CD4-positive, alpha-beta memory T cell (primary cell): ENCODE measurements at regions of chr6 and their contacts with region 1.

Region 1: DNA sequence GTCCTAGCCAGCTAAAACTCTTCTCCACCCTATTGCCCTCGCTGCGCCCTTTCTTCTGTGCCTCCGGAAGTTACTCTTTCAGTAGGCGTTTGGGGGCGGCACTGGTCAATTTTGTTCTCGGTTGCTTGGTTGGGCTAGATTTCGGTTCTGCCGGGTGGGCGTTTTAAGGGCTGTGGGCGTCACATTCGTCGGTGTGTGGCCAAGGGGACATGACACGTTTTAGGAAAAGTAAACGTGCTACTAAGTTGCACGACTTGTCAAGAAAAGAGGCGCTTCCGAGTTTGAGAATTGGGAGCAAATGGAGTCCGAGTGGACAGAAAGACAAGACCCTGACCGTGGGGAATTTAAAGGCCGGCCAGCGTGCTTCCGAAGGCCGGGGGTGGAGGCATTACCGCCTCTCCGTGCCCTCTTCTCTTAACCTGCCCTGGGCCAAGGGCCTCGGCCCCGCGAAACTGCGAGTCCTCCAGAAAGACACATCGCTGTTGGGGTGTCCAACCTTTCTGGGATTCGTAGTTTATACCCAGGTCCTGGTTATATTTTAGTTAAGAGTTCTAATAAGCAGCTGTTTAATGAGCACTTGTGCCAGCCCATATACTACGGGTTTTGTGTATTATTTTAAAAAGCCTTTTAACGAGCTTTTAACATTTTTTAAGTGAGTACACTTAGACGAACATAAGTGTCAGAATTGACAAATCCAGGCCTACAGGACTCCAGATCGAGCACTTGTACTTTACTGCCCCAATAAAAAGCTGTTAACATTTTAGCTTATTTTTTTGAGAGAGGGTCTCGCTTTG is 661 bp upstream of the BAG6 start:
- DNase-seq: peak in 1 of 5 donors; percentile 93
- H3K4me3 ChIP-seq: peak overlapping the region; percentile 85 to 92
- H3K4me3 Mint-ChIP-seq: peak overlapping the region; percentile 96 to 100 (median 98)
- H3K27ac ChIP-seq: peak overlapping the region; percentile 93
- H3K27ac Mint-ChIP-seq: peak overlapping the region; percentile 99 to 100 (median 100)
- H3K4me1 ChIP-seq: peaks cover 33% of the 10 kb centered on the region
- H3K4me1 Mint-ChIP-seq: peaks cover 35 to 72% (median 46%) of the 10 kb centered on the region in 4 donors
- H3K27me3 ChIP-seq: no peaks in the 10 kb centered on the region
- H3K27me3 Mint-ChIP-seq: no peaks in the 10 kb centered on the region

Region 2: GRCh38 chr6:31271641-31272357 is 381.3 kb before region 1 on chr6 and contains the start of gene HLA-C:
- CTCF ChIA-PET with region 1: no interaction called
- POLR2A ChIA-PET with region 1: no interaction called
- intact Hi-C with region 1: no loop called
- DNase-seq: peak; percentile 92 to 98 (median 93)
- H3K4me3 ChIP-seq: peak within 1 kb of the TSS; percentile 88 to 94
- H3K4me3 Mint-ChIP-seq: peak within 1 kb of the TSS; percentile 95 to 100 (median 98)
- H3K27ac ChIP-seq: peak within 1 kb of the TSS; percentile 100
- H3K27ac Mint-ChIP-seq: peak within 1 kb of the TSS; percentile 99 to 100 (median 100)
- H3K4me1 ChIP-seq: peaks cover 51% of the 10 kb centered on the region
- H3K4me1 Mint-ChIP-seq: peaks cover 45 to 77% (median 54%) of the 10 kb centered on the region in 4 donors
- H3K27me3 ChIP-seq: no peaks in the 10 kb centered on the region
- H3K27me3 Mint-ChIP-seq: peaks cover 0 to 2% of the 10 kb centered on the region in 2 donors
- total RNA-seq, gene HLA-C: 1,481 to 1,487 TPM

Region 3: DNA sequence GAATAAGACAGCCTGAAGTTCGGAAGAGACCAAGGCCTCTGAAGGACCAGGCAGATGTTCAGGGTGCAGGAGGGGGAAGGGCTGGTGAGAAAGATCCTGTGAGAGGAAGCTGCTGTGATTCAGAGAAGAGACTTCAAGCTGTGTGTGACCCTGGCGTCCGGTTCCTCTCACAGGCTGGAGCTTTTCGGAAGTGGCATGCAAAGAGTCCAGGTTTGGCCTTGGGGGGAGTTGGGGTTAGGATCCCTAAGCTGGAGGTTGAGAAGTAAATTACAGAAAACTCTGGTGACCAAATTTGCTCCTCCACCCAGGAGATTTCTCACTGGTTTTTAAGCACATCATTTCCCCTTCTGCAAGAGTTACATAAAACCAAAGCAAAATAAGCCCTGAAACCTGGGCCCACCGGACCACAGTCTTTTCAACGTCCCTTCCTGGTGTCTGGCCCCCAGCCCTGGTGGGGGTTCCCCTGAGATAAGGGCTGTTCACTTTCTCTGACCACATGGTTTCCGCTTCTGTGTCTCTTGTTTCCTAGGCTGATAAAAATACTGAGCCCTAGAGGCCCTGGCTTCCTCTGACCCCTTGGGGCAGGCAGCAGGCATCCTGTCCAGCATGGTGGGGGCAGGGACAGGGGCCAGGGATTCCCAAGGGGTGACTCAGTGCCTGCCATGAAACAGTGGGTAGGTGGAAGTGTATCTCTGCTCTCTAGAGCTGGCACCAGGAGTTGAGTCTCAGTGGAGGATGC is 93.0 kb before region 1 on chr6:
- CTCF ChIA-PET with region 1: no interaction called
- POLR2A ChIA-PET with region 1: interaction called, 13 read pairs
- intact Hi-C with region 1: no loop called
- DNase-seq: peak in 3 of 5 donors; percentile 35 to 76 (median 38)
- H3K4me3 ChIP-seq: peak overlapping the region in 1 of 2 donors; percentile 53
- H3K4me3 Mint-ChIP-seq: peak overlapping the region; percentile 78 to 90 (median 84)
- H3K27ac ChIP-seq: peak overlapping the region; percentile 58
- H3K27ac Mint-ChIP-seq: peak overlapping the region; percentile 91 to 99 (median 95)
- H3K4me1 ChIP-seq: peaks cover 87% of the 10 kb centered on the region
- H3K4me1 Mint-ChIP-seq: peaks cover 53 to 87% (median 65%) of the 10 kb centered on the region in 4 donors
- H3K27me3 ChIP-seq: no peaks in the 10 kb centered on the region
- H3K27me3 Mint-ChIP-seq: no peaks in the 10 kb centered on the region

Region 4: GRCh38 chr6:31619805-31620585 is 33.1 kb before region 1 on chr6:
- CTCF ChIA-PET with region 1: no interaction called
- POLR2A ChIA-PET with region 1: interaction called, 66 read pairs
- intact Hi-C with region 1: loop called (anchors 1 kb)
- DNase-seq: peak; percentile 96 to 98 (median 98)
- H3K4me3 ChIP-seq: peak overlapping the region in 1 of 2 donors; percentile 93
- H3K4me3 Mint-ChIP-seq: peak overlapping the region; percentile 89 to 98 (median 93)
- H3K27ac ChIP-seq: peak overlapping the region; percentile 99
- H3K27ac Mint-ChIP-seq: peak overlapping the region; percentile 91 to 99 (median 98)
- H3K4me1 ChIP-seq: peaks cover 34% of the 10 kb centered on the region
- H3K4me1 Mint-ChIP-seq: peaks cover 21 to 49% (median 39%) of the 10 kb centered on the region in 4 donors
- H3K27me3 ChIP-seq: no peaks in the 10 kb centered on the region
- H3K27me3 Mint-ChIP-seq: no peaks in the 10 kb centered on the region

Region 5: GRCh38 chr6:31702819-31703522 is 49.8 kb after region 1 on chr6 and contains the start of gene ABHD16A:
- CTCF ChIA-PET with region 1: interaction called, 4 read pairs
- POLR2A ChIA-PET with region 1: interaction called, 20 read pairs
- intact Hi-C with region 1: loop called (anchors 1 kb)
- DNase-seq: peak; percentile 96 to 98 (median 97)
- H3K4me3 ChIP-seq: peak within 1 kb of the TSS; percentile 70 to 82
- H3K4me3 Mint-ChIP-seq: peak within 1 kb of the TSS; percentile 97 to 99 (median 98)
- H3K27ac ChIP-seq: peak within 1 kb of the TSS; percentile 97
- H3K27ac Mint-ChIP-seq: peak within 1 kb of the TSS; percentile 93 to 99 (median 98)
- H3K4me1 ChIP-seq: peaks cover 28% of the 10 kb centered on the region
- H3K4me1 Mint-ChIP-seq: peaks cover 21 to 44% (median 34%) of the 10 kb centered on the region in 4 donors
- H3K27me3 ChIP-seq: no peaks in the 10 kb centered on the region
- H3K27me3 Mint-ChIP-seq: no peaks in the 10 kb centered on the region
- total RNA-seq, gene ABHD16A: 66.0 to 69.2 TPM

Region 6: DNA sequence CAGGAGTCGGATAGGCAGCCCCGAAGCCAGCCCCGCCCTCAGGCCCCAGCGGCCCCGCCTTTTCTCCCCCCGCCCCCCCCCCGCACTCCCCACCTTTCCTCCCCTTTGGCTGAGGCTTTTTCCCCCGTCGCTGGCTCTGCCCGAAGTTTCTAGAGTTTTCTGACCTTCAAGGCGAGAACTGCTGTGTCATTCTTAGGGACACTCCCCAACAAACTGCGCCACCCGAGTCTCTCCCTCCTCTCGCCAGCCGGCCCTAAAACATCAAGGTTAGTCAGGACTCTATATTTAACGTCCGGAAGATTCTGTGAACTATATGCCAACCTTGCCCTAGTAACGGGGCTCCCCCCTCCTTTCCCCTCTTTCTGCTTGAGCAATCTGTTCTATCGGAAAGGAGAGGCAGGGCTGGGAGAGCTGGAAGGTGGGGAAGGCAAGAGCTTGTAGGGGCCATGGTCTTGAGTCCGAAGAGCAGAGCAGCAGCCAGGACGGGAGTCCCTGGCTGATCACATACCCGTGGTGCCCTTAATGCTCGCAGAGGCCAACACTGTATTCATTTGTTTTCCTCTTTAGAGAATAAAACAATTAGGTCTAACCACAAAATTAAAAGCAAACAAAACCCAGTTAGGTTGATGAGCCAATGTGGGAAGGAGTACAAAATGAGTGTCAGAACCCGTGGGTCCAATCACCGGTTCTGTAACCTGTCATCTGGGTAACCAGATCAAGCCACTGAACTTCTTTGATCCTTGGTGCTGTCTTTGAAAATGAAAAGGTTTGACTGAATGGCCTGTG is 169.1 kb after region 1 on chr6:
- CTCF ChIA-PET with region 1: interaction called, 3 read pairs
- POLR2A ChIA-PET with region 1: interaction called, 23 read pairs
- intact Hi-C with region 1: no loop called
- DNase-seq: peak; percentile 71 to 83 (median 73)
- H3K4me3 ChIP-seq: peak overlapping the region; percentile 84 to 96
- H3K4me3 Mint-ChIP-seq: peak overlapping the region; percentile 94 to 98 (median 97)
- H3K27ac ChIP-seq: peak overlapping the region; percentile 74
- H3K27ac Mint-ChIP-seq: peak overlapping the region; percentile 98 to 99 (median 98)
- H3K4me1 ChIP-seq: peaks cover 72% of the 10 kb centered on the region
- H3K4me1 Mint-ChIP-seq: peaks cover 31 to 81% (median 54%) of the 10 kb centered on the region in 4 donors
- H3K27me3 ChIP-seq: no peaks in the 10 kb centered on the region
- H3K27me3 Mint-ChIP-seq: no peaks in the 10 kb centered on the region

Region 7: DNA sequence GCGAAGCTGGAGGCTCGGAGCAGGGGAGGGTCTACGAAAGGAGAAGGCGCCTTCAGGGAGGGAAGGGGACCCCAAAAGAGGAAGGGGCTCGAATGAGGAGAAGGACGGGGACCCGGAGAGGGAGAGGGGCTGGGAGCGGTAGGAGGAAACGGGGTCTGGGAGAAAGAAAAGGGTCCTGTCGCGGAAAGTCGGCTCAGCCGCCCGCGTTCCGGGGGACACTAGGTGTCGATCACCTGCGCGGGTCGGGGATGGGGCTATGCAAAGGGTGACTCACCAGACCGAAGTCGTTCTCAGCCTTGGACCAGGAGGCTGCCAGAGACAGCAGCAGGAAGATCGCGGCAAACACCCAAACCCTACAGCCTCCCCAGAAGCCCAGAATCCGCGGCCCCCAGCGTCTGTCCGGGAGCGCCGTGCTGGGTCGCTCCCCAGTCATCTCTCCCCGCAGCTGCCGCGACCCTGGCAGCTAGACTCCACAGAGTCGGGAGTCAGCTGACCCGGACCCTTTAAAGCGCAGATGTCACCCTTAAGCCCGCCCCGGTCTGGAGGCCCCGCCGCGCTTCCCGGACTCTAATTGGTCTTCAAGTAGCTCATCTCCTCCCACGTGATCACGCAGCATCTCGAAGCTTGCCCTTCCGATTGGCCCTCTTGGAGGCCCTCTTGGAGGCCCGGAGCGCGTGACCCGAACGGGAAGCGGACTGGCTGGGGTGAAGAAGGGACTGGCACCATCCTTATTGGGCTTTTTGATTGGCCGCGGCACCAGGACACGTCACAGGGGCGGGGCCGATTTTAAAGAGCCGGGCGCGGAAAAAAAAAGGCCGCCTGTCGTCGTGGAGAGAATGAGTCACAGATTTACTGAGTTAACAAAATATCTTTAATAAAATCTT is 209.5 kb after region 1 on chr6 and contains the start of gene NEU1:
- CTCF ChIA-PET with region 1: no interaction called
- POLR2A ChIA-PET with region 1: interaction called, 24 read pairs
- intact Hi-C with region 1: loop called (anchors 1 kb)
- DNase-seq: peak; percentile 97 to 100 (median 100)
- H3K4me3 ChIP-seq: peak within 1 kb of the TSS; percentile 88 to 95
- H3K4me3 Mint-ChIP-seq: peak within 1 kb of the TSS; percentile 87 to 96 (median 94)
- H3K27ac ChIP-seq: peak within 1 kb of the TSS; percentile 90
- H3K27ac Mint-ChIP-seq: peak within 1 kb of the TSS; percentile 94 to 98 (median 97)
- H3K4me1 ChIP-seq: peaks cover 16% of the 10 kb centered on the region
- H3K4me1 Mint-ChIP-seq: peaks cover 14 to 33% (median 23%) of the 10 kb centered on the region in 4 donors
- H3K27me3 ChIP-seq: no peaks in the 10 kb centered on the region
- H3K27me3 Mint-ChIP-seq: peaks cover 0 to 2% of the 10 kb centered on the region in 2 donors
- total RNA-seq, gene NEU1: 19.6 to 21.1 TPM

Region 8: GRCh38 chr6:32137454-32137853 is 484.3 kb after region 1 on chr6:
- CTCF ChIA-PET with region 1: no interaction called
- POLR2A ChIA-PET with region 1: no interaction called
- intact Hi-C with region 1: no loop called
- DNase-seq: no peak
- H3K4me3 ChIP-seq: no peak overlapping the region
- H3K4me3 Mint-ChIP-seq: no peak overlapping the region
- H3K27ac ChIP-seq: no peak overlapping the region
- H3K27ac Mint-ChIP-seq: no peak overlapping the region
- H3K4me1 ChIP-seq: no peaks in the 10 kb centered on the region
- H3K4me1 Mint-ChIP-seq: no peaks in the 10 kb centered on the region
- H3K27me3 ChIP-seq: no peaks in the 10 kb centered on the region
- H3K27me3 Mint-ChIP-seq: peaks cover 0 to 1% of the 10 kb centered on the region in 2 donors

Region 9: GRCh38 chr6:32843979-32844838 is 1191.1 kb after region 1 on chr6 and contains the start of gene PSMB8:
- CTCF ChIA-PET with region 1: no interaction called
- POLR2A ChIA-PET with region 1: interaction called, 9 read pairs
- intact Hi-C with region 1: loop called (anchors 10 kb)
- DNase-seq: peak; percentile 97 to 100 (median 98)
- H3K4me3 ChIP-seq: peak within 1 kb of the TSS; percentile 89 to 98
- H3K4me3 Mint-ChIP-seq: peak within 1 kb of the TSS; percentile 94 to 100 (median 97)
- H3K27ac ChIP-seq: peak within 1 kb of the TSS; percentile 99
- H3K27ac Mint-ChIP-seq: peak within 1 kb of the TSS; percentile 99 to 100 (median 99)
- H3K4me1 ChIP-seq: peaks cover 81% of the 10 kb centered on the region
- H3K4me1 Mint-ChIP-seq: peaks cover 61 to 98% (median 72%) of the 10 kb centered on the region in 4 donors
- H3K27me3 ChIP-seq: no peaks in the 10 kb centered on the region
- H3K27me3 Mint-ChIP-seq: no peaks in the 10 kb centered on the region
- total RNA-seq, gene PSMB8: 134 to 138 TPM

Region 10: GRCh38 chr6:33112148-33112547 is 1459.0 kb after region 1 on chr6:
- CTCF ChIA-PET with region 1: no interaction called
- POLR2A ChIA-PET with region 1: no interaction called
- intact Hi-C with region 1: no loop called
- DNase-seq: peak; percentile 25 to 59 (median 42)
- H3K4me3 ChIP-seq: no peak overlapping the region
- H3K4me3 Mint-ChIP-seq: no peak overlapping the region
- H3K27ac ChIP-seq: no peak overlapping the region
- H3K27ac Mint-ChIP-seq: no peak overlapping the region
- H3K4me1 ChIP-seq: no peaks in the 10 kb centered on the region
- H3K4me1 Mint-ChIP-seq: peaks cover 0 to 8% (median 3%) of the 10 kb centered on the region in 4 donors
- H3K27me3 ChIP-seq: peaks cover 12% of the 10 kb centered on the region
- H3K27me3 Mint-ChIP-seq: peaks cover 47 to 69% of the 10 kb centered on the region in 2 donors